ENCODE measurements at regions of chr5 and their contacts with region 1.

Region 1: DNA sequence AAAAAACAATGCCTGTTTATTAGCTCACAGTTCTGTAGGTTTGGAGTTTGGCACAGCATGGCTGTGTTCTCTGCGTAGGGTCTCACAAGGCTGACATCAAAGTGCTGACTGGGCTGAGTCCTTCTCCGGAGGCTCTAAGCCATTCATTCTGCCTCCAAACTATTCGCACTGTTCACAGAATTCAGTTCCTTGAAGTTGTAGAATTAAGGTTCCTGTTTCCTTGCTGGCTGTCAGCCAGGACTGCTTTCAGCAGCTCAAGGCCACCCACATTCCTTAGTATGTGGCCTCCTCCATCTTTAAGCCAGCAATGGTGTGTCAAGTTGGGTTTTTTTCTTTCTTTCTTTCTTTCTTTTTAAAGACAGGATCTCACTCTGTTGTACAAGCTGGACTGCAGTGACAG is 161.9 kb downstream of the CDH6 start:
- DNase-seq: no peak
- ATAC-seq: no peak
- H3K4me3 ChIP-seq: no peak overlapping the region
- H3K27ac ChIP-seq: no peak overlapping the region
- H3K4me1 ChIP-seq: no peaks in the 10 kb centered on the region
- H3K27me3 ChIP-seq: no peaks in the 10 kb centered on the region
- CTCF ChIP-seq: no peak

Region 2: DNA sequence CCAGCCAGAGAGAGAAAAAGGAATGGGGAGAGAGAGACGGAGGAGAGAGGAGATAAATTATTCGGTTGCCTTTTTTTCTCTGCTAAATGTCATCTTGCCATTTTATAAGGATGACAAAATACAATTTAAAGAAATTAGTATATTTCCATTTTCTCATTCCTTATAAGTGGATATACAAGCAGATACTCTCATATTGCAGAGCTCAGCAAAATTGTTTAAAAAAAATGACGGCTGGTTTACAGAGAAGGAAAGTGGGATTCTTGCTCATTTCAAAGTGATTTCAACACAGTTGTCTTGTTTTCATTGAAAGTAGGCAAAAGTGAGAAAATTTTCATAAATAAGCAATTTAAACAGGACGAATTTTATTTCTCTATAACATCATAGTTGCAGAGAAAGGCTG is 803.7 kb before region 1 on chr5:
- intact Hi-C with region 1: loop called in 1 of 10 experiments (anchors 10 kb)
- DNase-seq: no peak
- ATAC-seq: no peak
- H3K4me3 ChIP-seq: no peak overlapping the region
- H3K27ac ChIP-seq: no peak overlapping the region
- H3K4me1 ChIP-seq: no peaks in the 10 kb centered on the region
- H3K27me3 ChIP-seq: no peaks in the 10 kb centered on the region
- CTCF ChIP-seq: no peak

Region 3: DNA sequence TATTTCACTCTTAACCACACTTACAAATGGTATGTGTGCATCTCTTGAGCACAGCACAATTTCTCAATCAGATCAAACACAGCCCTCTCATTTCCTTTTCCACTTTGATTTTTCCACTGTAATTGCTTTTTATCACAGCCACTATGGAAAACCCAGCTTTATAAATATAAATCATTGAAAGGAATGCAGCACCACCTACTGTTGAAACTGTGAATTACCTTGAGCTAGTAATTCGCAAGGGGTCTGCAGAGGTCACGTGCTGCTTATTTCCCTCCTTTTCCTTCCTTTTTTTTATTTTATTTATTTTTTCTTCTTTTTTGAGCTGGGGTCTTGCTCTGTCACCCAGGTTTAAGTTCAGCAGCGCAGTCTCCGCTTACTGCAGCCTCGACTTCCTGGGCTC is 84.9 kb before region 1 on chr5:
- intact Hi-C with region 1: no loop called
- DNase-seq: no peak
- ATAC-seq: no peak
- H3K4me3 ChIP-seq: no peak overlapping the region
- H3K27ac ChIP-seq: no peak overlapping the region
- H3K4me1 ChIP-seq: peaks cover 0 to 12% (median 0%) of the 10 kb centered on the region in 9 donors
- H3K27me3 ChIP-seq: peaks cover 0 to 15% (median 2%) of the 10 kb centered on the region in 7 donors
- CTCF ChIP-seq: peak; percentile 28 to 66 (median 60)

Measured in heart right ventricle (tissue), 16 donors.